ENCODE measurements at regions of chr2 and their contacts with region 1.

Region 1: GRCh38 chr2:144240587-144241339 is 279.2 kb downstream of the ZEB2 start:
- DNase-seq: no peak
- CTCF ChIP-seq: no peak

Region 2: DNA sequence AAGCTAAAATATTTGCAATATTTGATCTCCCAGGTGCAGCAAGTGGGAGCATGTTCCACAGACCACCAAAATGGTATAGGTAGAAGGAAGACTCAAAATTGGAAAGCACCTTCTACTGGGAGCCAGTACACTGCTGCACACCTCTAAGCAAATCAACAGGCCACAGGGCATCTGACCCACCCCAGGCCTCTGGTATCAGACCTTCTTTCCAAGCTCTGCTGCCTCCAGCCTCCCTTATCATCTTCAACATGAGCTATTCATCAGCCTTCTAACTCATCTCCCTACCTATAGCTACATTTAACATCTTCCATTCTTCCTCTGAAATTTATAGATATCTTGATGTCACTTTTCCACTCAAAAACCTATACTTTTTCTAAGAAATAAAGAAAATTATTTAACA is 15.7 kb before region 1 on chr2:
- CTCF ChIA-PET with region 1: interaction called, 10 read pairs
- POLR2A ChIA-PET with region 1: no interaction called
- DNase-seq: no peak
- CTCF ChIP-seq: no peak

Region 3: DNA sequence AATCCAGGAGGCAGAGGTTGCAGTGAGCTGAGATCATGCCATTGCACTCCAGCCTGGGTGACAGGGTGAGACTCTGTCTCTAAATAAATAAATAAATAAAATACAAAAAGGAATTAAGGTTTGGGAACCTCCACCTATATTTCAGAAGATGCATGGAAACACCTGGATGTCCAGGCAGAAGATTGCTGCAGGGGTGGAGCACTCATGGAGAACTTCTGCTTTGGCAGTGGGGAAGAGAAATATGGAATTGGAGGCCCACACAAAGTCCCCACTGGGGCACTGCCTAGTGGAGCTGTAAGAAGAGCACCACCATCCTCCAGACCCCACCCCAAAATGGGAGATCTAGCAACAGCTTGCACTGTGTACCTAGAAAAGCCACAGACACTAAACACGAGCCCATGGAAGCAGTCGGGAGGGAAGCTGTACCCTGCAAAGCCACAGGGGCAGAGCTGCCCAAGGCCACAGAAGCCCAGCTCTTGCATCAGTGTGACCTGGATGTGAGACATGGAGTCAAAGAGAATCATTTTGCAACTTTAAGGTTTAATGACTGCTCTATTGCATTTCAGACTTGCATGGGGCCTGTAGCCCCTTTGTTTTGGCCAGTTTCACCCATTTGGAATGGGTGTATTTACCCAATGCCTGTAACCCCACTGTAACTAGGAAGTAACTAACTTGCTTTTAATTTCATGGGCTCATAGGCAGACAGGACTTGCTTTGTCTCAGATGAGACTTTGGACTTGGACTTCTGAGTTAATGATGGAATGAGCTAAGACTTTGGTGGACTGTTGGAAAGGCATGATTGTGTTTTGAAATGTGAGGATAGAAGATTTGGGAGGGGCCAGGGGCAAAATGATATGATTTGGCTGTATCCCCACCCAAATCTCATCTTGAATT is 13.8 kb after region 1 on chr2:
- CTCF ChIA-PET with region 1: interaction called, 16 read pairs
- POLR2A ChIA-PET with region 1: no interaction called
- DNase-seq: no peak
- CTCF ChIP-seq: no peak

Region 4: DNA sequence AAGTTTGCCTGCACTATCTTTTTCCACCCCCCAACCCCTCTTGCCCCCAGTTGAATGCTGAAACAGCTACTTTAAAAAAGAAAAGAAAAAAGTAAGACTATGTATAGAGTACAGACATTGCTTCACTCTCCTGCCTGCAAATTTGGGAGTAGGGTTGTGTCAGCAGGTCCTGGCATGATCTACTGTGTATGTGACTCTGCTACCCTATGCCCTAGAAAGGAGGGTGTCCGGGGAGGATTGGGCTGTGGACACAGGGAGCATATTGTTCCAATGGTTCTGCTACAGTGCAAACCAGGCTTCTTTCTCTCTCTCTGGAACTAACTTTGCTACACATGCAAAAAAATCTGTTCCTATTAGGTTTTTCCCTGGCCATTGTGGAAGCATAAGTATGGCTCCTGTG is 289.1 kb after region 1 on chr2:
- CTCF ChIA-PET with region 1: no interaction called
- POLR2A ChIA-PET with region 1: no interaction called
- DNase-seq: no peak
- CTCF ChIP-seq: no peak

Region 5: GRCh38 chr2:144596073-144596871 is 355.5 kb after region 1 on chr2:
- CTCF ChIA-PET with region 1: no interaction called
- POLR2A ChIA-PET with region 1: no interaction called
- DNase-seq: peak; percentile 19
- CTCF ChIP-seq: no peak